ENCODE measurements at regions of chr11 and their contacts with region 1.

Region 1: DNA sequence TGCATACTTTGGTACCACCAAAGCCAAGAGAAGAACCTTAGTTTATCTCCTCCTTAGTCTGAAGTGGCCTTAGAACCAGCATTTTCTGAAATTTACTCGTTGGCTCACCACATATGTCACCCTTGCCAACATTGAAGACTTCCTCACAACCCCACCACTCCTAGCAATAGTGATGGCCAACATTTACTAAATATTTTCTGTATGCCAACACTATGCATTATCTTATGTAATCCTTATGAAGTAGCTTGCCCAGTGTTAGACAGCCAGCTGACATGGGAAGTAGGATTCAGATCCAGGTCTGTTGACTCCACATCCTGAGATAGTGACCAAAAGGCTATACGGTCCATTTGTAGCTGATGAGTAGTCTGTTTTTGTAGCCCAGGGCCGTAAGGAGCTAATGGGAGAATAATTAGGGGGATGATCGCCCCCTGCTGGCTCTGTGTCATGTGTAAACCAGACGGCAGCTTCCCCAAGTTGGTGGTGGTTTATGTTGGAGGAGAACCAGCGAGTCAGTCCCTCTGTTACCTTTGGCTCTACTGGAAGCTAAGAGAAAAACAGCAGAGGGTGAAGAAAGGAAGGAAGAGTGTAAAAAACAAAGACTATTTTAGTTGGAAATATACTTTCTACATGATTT is 120.5 kb upstream of the RASSF10 start:
- DNase-seq: peak; percentile 70 to 88
- H3K4me3 ChIP-seq: no peak overlapping the region
- H3K4me1 ChIP-seq: peaks cover 6% of the 10 kb centered on the region
- H3K27me3 ChIP-seq: no peaks in the 10 kb centered on the region

Region 2: DNA sequence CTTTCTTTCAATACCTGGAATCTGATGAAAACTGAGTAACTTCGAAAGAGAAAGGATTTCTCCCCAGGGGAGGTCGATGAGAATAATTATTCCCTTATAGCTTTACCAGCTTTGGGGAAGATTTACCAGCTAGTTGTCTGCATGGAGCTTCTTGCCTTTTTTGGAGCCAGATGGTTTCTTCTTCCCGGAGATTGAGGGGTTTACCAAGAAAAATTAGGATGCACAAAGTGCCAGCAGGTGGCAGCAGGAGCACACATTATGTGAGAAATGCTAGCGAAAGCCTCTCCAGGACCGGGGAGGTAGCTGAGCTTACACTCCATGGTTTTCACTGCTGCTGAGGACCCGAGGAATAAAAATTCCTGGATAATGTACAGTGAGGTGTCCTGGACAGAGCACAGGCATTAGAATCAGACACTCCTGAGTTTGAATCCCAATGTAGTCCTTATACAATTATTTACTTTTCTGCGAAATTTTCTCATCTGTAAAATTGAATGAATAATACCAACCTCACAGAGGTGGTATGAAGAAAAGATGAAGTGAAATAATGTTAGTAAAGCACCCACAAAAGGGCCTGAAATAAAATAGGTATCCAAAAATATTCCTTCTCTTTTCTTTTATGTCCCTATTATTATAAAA is 557.3 kb before region 1 on chr11:
- in situ Hi-C with region 1: loop called (anchors 10 kb)
- DNase-seq: peak; percentile 90 to 91
- H3K4me3 ChIP-seq: no peak overlapping the region
- H3K4me1 ChIP-seq: peaks cover 18% of the 10 kb centered on the region
- H3K27me3 ChIP-seq: no peaks in the 10 kb centered on the region

Region 3: GRCh38 chr11:12680246-12680939 is 208.2 kb before region 1 on chr11:
- in situ Hi-C with region 1: loop called (anchors 25 kb)
- DNase-seq: peak; percentile 93 to 95
- H3K4me3 ChIP-seq: peak overlapping the region; percentile 11
- H3K4me1 ChIP-seq: peaks cover 63% of the 10 kb centered on the region
- H3K27me3 ChIP-seq: no peaks in the 10 kb centered on the region

Measured in HAP-1 (cell line).